GM12878 (cell line): ENCODE measurements at regions of chr15 and their contacts with region 1.

Region 1: DNA sequence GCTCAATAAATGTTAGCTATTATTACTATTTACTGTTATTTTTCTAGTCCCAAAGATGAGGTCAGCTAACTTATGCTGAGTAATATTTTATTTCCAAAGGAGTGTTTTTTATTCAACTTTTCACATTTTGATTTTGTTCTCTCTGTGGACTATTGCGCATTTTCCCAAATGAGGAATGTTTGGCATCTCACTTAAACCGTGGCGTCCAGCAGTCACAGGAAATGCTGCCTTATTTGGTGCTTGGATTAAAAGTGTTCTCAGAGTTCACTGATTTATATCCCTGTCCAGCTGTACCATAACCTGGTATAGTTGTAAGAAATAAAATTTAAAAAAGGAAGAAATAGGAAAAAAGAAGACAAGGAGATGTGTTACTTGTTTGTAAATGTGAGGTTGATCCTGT is 166.8 kb downstream of the THSD4 start:
- DNase-seq: no peak
- ATAC-seq: no peak
- H3K4me3 ChIP-seq: no peak overlapping the region
- H3K27ac ChIP-seq: no peak overlapping the region
- H3K4me1 ChIP-seq: no peaks in the 10 kb centered on the region
- H3K27me3 ChIP-seq: no peaks in the 10 kb centered on the region
- CTCF ChIP-seq: no peak
- EP300 ChIP-seq: no peak
- POLR2A ChIP-seq: no peak
- RAD21 ChIP-seq: no peak

Region 2: DNA sequence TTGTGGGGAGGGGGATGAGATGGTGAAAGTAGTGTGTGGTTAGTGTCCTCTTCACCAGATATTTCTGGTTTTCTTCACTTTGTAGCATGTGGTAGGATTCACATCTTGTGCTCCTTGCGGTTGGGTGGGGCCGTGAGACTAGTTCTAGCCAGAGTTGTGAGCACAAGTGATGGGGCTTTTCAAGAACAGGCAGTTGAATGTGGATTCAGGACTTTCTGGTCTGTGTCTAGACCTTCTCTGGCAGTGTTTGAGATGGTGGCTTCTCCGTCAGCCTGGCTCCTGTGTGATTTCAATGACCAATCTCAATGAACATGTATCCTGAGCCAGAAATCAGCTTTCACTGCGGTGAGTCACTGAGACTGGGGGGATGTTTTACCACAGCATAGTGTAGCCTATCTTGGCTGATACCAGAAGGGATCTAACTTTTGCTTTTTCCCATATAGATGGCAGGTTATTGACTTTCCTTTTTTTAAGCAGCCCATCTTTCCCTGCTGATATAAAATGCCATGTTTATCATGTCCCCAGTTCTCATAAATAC is 1746.9 kb before region 1 on chr15:
- CTCF ChIA-PET with region 1: no interaction called
- POLR2A ChIA-PET with region 1: no interaction called
- RAD21 ChIA-PET with region 1: no interaction called
- SMC1A ChIA-PET with region 1: no interaction called
- in situ Hi-C with region 1: no loop called
- intact Hi-C with region 1: no loop called
- DNase-seq: no peak
- ATAC-seq: no peak
- H3K4me3 ChIP-seq: no peak overlapping the region
- H3K27ac ChIP-seq: no peak overlapping the region
- H3K4me1 ChIP-seq: no peaks in the 10 kb centered on the region
- H3K27me3 ChIP-seq: no peaks in the 10 kb centered on the region; a peak in 1 of 4 replicates
- CTCF ChIP-seq: no peak
- EP300 ChIP-seq: no peak
- POLR2A ChIP-seq: no peak
- RAD21 ChIP-seq: no peak

Region 3: DNA sequence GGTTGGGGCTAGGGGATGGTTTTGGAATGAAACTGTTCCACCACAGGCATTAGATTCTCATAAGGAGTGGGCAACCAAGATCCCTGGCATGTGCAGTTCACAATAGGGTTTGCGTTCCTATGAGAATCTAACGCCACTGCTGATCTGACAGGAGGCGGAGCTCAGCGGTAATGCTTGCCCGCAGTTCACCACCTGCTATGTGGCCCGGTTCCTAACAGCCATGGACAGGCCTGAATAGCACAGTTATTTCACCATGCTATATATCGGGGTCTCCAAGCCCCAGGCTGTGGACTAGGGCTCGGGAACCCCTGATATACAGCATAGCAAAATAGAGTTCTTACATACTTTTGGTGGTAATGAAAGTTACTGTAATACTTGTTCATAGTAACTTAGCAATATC is 266.7 kb before region 1 on chr15:
- CTCF ChIA-PET with region 1: no interaction called
- POLR2A ChIA-PET with region 1: no interaction called
- RAD21 ChIA-PET with region 1: no interaction called
- SMC1A ChIA-PET with region 1: no interaction called
- in situ Hi-C with region 1: no loop called
- intact Hi-C with region 1: no loop called
- DNase-seq: no peak
- ATAC-seq: no peak
- H3K4me3 ChIP-seq: no peak overlapping the region
- H3K27ac ChIP-seq: no peak overlapping the region
- H3K4me1 ChIP-seq: no peaks in the 10 kb centered on the region
- H3K27me3 ChIP-seq: no peaks in the 10 kb centered on the region
- CTCF ChIP-seq: no peak
- EP300 ChIP-seq: no peak
- POLR2A ChIP-seq: no peak
- RAD21 ChIP-seq: no peak

Region 4: GRCh38 chr15:71231758-71232157 is 50.3 kb before region 1 on chr15:
- CTCF ChIA-PET with region 1: no interaction called
- POLR2A ChIA-PET with region 1: no interaction called
- RAD21 ChIA-PET with region 1: no interaction called
- SMC1A ChIA-PET with region 1: no interaction called
- in situ Hi-C with region 1: loop called (anchors 5 kb)
- intact Hi-C with region 1: no loop called
- DNase-seq: no peak
- ATAC-seq: no peak
- H3K4me3 ChIP-seq: no peak overlapping the region
- H3K27ac ChIP-seq: no peak overlapping the region
- H3K4me1 ChIP-seq: no peaks in the 10 kb centered on the region
- H3K27me3 ChIP-seq: no peaks in the 10 kb centered on the region
- CTCF ChIP-seq: no peak
- EP300 ChIP-seq: no peak
- POLR2A ChIP-seq: no peak
- RAD21 ChIP-seq: no peak

Region 5: DNA sequence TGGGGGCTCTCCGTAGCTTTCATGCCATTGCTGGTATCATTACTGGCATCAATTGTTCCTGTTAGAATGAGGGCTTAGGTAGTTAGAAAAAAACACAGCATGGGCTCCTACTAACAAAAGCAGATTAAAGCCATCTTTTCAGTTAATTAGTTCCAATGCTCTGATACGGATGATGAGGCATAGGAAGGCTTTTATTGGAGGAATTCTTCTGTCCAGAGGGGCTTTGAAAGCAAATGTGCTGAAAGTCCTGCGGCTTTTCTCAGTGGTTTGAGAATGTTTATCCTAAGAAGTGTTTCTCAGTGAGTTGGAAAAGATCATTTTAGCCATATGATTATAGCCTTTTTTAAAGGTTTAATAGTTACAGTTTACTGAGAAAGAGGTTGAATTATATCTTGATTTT is 31.7 kb after region 1 on chr15:
- CTCF ChIA-PET with region 1: no interaction called
- POLR2A ChIA-PET with region 1: no interaction called
- RAD21 ChIA-PET with region 1: no interaction called
- SMC1A ChIA-PET with region 1: no interaction called
- in situ Hi-C with region 1: no loop called
- intact Hi-C with region 1: no loop called
- DNase-seq: no peak
- ATAC-seq: no peak
- H3K4me3 ChIP-seq: no peak overlapping the region
- H3K27ac ChIP-seq: no peak overlapping the region
- H3K4me1 ChIP-seq: no peaks in the 10 kb centered on the region
- H3K27me3 ChIP-seq: no peaks in the 10 kb centered on the region; a peak in 1 of 4 replicates
- CTCF ChIP-seq: no peak
- EP300 ChIP-seq: no peak
- POLR2A ChIP-seq: no peak
- RAD21 ChIP-seq: no peak

Region 6: GRCh38 chr15:71337207-71337700 is 55.2 kb after region 1 on chr15:
- CTCF ChIA-PET with region 1: no interaction called
- POLR2A ChIA-PET with region 1: no interaction called
- RAD21 ChIA-PET with region 1: no interaction called
- SMC1A ChIA-PET with region 1: no interaction called
- in situ Hi-C with region 1: no loop called
- intact Hi-C with region 1: no loop called
- DNase-seq: no peak
- ATAC-seq: no peak
- H3K4me3 ChIP-seq: no peak overlapping the region
- H3K27ac ChIP-seq: no peak overlapping the region
- H3K4me1 ChIP-seq: peaks cover 3% of the 10 kb centered on the region
- H3K27me3 ChIP-seq: no peaks in the 10 kb centered on the region
- CTCF ChIP-seq: no peak
- EP300 ChIP-seq: no peak
- POLR2A ChIP-seq: no peak
- RAD21 ChIP-seq: no peak